HepG2 (cell line): ENCODE measurements at regions of chr1 and their contacts with region 1.

Region 1: GRCh38 chr1:196651637-196652215 is at the start of gene CFH:
- DNase-seq: no peak
- ATAC-seq: no peak
- H3K4me3 ChIP-seq: no peak within 1 kb of the TSS
- H3K27ac ChIP-seq: no peak within 1 kb of the TSS
- H3K4me1 ChIP-seq: no peaks in the 10 kb centered on the region
- H3K27me3 ChIP-seq: no peaks in the 10 kb centered on the region
- CTCF ChIP-seq: no peak
- EP300 ChIP-seq: no peak
- POLR2A ChIP-seq: no peak
- RAD21 ChIP-seq: no peak
- total RNA-seq, gene CFH: not detected in 2 replicates

Region 2: DNA sequence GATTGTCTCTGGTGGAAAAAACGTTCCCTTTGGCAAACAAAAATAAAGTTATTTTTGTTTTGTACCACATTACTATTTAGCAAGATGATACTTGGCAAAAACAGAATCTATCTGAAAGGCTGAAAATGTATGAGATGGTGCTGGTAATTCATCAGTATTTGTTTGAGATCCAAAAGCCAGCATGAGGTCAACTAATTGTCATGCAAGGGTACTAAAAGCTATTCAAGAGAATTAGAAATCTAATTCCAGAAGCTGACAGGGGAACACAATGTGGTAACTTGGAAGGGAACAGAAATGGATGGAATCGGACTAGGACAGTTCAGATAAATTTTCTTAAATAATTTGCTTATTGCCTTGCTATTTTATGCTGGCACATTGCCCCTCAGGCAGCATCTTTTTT is 307.3 kb before region 1 on chr1:
- CTCF ChIA-PET with region 1: no interaction called
- POLR2A ChIA-PET with region 1: no interaction called
- in situ Hi-C with region 1: loop called (anchors 10 kb)
- intact Hi-C with region 1: no loop called
- DNase-seq: no peak
- ATAC-seq: no peak
- H3K4me3 ChIP-seq: no peak overlapping the region
- H3K27ac ChIP-seq: no peak overlapping the region
- H3K4me1 ChIP-seq: no peaks in the 10 kb centered on the region
- H3K27me3 ChIP-seq: no peaks in the 10 kb centered on the region
- CTCF ChIP-seq: no peak
- EP300 ChIP-seq: no peak
- POLR2A ChIP-seq: no peak
- RAD21 ChIP-seq: no peak

Region 3: GRCh38 chr1:196680107-196680506 is 28.4 kb after region 1 on chr1:
- CTCF ChIA-PET with region 1: no interaction called
- POLR2A ChIA-PET with region 1: no interaction called
- in situ Hi-C with region 1: no loop called
- intact Hi-C with region 1: no loop called
- DNase-seq: no peak
- ATAC-seq: no peak
- H3K4me3 ChIP-seq: no peak overlapping the region
- H3K27ac ChIP-seq: no peak overlapping the region
- H3K4me1 ChIP-seq: no peaks in the 10 kb centered on the region
- H3K27me3 ChIP-seq: no peaks in the 10 kb centered on the region
- CTCF ChIP-seq: no peak
- EP300 ChIP-seq: no peak
- POLR2A ChIP-seq: no peak
- RAD21 ChIP-seq: no peak

Region 4: GRCh38 chr1:196861429-196861828 is 209.7 kb after region 1 on chr1:
- CTCF ChIA-PET with region 1: no interaction called
- POLR2A ChIA-PET with region 1: no interaction called
- in situ Hi-C with region 1: no loop called
- intact Hi-C with region 1: no loop called
- DNase-seq: no peak
- ATAC-seq: no peak
- H3K4me3 ChIP-seq: no peak overlapping the region
- H3K27ac ChIP-seq: no peak overlapping the region
- H3K4me1 ChIP-seq: no peaks in the 10 kb centered on the region
- H3K27me3 ChIP-seq: no peaks in the 10 kb centered on the region
- CTCF ChIP-seq: no peak
- EP300 ChIP-seq: no peak
- POLR2A ChIP-seq: no peak
- RAD21 ChIP-seq: no peak